ENCODE measurements at regions of chr11 and their contacts with region 1.

Region 1: GRCh38 chr11:34051349-34052035 is at the start of gene CAPRIN1:
- DNase-seq: peak; percentile 94
- ATAC-seq: peak; percentile 67
- H3K4me3 ChIP-seq: peak within 1 kb of the TSS; percentile 90 to 98 (median 95)
- H3K4me3 Mint-ChIP-seq: peak within 1 kb of the TSS; percentile 97
- H3K27ac ChIP-seq: peak within 1 kb of the TSS; percentile 99 to 100
- H3K27ac Mint-ChIP-seq: peak within 1 kb of the TSS; percentile 96
- H3K4me1 ChIP-seq: peaks cover 27 to 30% of the 10 kb centered on the region in 2 donors
- H3K4me1 Mint-ChIP-seq: peaks cover 28% of the 10 kb centered on the region
- H3K27me3 ChIP-seq: no peaks in the 10 kb centered on the region
- H3K27me3 Mint-ChIP-seq: no peaks in the 10 kb centered on the region
- CTCF ChIP-seq: no peak
- total RNA-seq, gene CAPRIN1: 132 and 133 TPM in 2 replicates

Region 2: DNA sequence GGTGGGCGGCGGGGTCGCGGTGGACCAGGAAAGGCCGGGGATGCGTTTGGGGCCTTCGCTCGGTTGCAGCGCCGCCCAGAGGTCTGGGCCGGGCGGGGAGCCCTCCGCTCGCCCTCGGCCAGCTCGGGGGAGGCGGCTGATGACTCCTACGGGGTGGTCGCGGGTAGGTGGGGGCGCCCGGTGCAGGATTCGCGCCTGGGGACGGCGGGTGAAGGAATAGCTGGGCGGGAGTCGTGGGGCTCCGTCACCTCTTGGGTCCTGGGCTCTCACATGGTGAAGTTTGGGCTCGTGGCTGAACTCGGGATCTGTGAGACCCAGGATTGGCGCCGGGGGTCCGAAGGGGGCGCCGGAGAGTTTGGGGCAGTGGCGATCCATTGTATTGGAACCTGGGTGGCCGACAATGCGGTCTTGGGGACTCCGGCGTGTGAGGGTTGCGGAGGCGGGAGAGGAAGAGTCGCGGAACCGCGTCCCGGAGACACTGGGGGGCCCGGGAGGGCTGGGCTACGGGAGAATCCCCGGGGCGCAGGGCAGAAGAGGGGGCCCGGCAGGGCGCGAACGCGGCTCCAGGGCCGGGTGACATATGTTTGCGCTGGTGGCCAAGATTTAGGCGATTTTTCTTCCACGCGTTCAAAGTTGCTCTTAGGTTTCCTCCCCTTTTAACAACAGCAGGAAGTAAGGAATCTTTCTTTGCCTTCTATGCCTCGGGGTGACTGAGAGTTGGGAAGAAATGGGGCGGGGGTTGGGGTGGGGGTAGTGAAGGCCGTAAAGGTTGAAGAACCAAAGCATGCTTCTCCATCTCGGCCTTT is 1157.9 kb before region 1 on chr11:
- CTCF ChIA-PET with region 1: no interaction called
- POLR2A ChIA-PET with region 1: no interaction called
- intact Hi-C with region 1: loop called (anchors 5 kb)
- DNase-seq: peak; percentile 79
- ATAC-seq: peak; percentile 44
- H3K4me3 ChIP-seq: peak overlapping the region; percentile 22 to 88 (median 83)
- H3K4me3 Mint-ChIP-seq: peak overlapping the region; percentile 88
- H3K27ac ChIP-seq: peak overlapping the region; percentile 61 to 70
- H3K27ac Mint-ChIP-seq: peak overlapping the region; percentile 93
- H3K4me1 ChIP-seq: peaks cover 12 to 16% of the 10 kb centered on the region in 2 donors
- H3K4me1 Mint-ChIP-seq: peaks cover 36% of the 10 kb centered on the region
- H3K27me3 ChIP-seq: no peaks in the 10 kb centered on the region
- H3K27me3 Mint-ChIP-seq: no peaks in the 10 kb centered on the region
- CTCF ChIP-seq: peak; percentile 63

Region 3: DNA sequence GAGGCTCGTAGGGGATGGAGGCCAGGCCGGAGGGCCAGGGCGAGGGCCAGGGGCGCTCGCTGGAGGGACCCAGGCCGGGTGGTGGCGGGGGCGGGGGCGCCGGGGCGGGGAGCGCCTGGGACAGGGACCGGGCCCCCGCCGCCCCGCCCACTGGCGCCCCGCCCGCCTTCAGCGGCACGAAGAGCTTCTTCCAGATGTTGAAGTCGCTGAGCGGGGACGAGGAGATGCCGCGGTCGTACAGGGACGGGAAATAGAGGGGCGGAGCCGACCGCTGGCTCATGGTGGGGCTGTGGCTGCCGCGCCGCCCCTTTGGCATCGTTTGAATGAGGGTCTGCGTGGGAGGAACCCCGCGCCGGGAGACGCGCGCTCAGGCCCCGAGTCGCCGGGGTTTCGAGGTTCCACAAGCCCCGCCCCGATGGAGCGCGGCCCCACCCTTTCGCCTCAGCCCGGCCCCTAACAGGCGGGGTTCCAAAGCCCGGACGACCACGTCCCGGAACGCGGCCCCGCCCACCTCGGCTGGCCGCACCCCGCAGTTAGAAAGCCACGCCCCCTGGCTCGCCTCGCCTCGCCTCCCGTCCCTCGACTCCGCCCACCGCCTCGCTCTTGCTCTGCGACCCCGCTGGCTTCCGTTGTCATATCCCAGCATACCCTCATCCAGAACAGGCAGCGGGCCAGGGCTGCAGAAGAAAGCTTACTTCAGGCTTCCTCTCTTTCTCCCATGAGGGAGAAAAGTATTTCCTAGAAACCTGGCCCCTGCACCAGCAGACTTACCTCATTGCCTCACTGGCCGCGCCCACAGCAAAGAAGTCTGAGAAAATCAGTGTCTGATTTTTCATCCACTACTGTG is 350.8 kb before region 1 on chr11 and contains the start of gene C11orf91:
- CTCF ChIA-PET with region 1: no interaction called
- POLR2A ChIA-PET with region 1: no interaction called
- intact Hi-C with region 1: loop called (anchors 2 kb)
- DNase-seq: peak; percentile 97
- ATAC-seq: peak; percentile 99
- H3K4me3 ChIP-seq: peak within 1 kb of the TSS; percentile 53 to 74 (median 60)
- H3K4me3 Mint-ChIP-seq: peak within 1 kb of the TSS; percentile 93
- H3K27ac ChIP-seq: no peak within 1 kb of the TSS
- H3K27ac Mint-ChIP-seq: peak within 1 kb of the TSS; percentile 57
- H3K4me1 ChIP-seq: peaks cover 6 to 16% of the 10 kb centered on the region in 2 donors
- H3K4me1 Mint-ChIP-seq: peaks cover 17% of the 10 kb centered on the region
- H3K27me3 ChIP-seq: peaks cover 0 to 14% (median 3%) of the 10 kb centered on the region in 4 experiments
- H3K27me3 Mint-ChIP-seq: peaks cover 5% of the 10 kb centered on the region
- CTCF ChIP-seq: no peak
- total RNA-seq, gene C11orf91: not detected in 2 replicates

Region 4: DNA sequence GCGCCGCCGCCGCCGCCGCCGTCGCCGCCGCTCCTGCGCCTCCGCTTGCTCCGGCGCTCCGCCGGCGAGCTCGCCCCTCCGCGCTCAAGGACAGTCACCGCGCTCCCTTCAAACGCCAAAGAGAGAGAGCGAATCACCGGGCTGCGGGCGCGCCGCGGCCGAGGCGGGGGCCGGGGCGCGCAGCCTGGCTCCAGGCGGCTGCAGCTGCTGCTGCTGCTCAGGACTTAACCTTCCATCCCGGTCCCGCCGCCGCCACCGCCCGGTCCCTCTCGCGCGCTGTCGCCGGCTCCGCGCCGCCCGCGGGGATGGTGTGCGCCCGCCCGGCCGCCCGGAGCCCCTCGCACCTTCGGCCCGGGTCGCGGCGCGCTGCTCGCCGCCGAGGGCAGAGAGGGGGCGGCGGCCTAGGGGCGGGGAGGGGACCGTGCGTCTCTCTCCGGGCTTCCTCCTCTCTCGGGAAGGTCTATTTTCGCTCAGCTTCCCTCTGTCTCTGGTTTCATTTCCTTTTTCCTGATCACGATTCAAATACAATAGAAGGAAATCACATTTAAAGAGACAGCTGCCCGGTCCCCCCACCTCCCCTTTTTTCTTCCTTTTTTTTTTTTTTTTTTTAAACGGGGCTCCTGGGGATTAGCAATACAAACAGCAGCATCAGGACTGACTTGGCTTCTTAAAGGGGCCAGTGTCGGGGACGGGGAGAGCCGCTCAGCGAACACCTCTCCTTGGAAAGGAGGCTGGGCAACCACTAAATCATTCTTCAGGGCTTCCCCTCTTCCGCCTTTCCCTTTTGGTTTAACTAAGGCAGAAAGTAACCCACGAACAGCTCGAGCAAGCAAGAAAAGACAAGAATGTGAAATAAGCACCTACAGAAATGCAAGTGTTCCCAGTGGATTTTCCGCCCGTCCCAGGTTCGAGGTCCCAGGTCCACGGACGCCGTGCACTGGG is 181.7 kb before region 1 on chr11:
- CTCF ChIA-PET with region 1: no interaction called
- POLR2A ChIA-PET with region 1: no interaction called
- intact Hi-C with region 1: loop called (anchors 5 kb)
- DNase-seq: peak; percentile 75
- ATAC-seq: peak; percentile 72
- H3K4me3 ChIP-seq: peak overlapping the region; percentile 64 to 86 (median 82)
- H3K4me3 Mint-ChIP-seq: peak overlapping the region; percentile 98
- H3K27ac ChIP-seq: no peak overlapping the region
- H3K27ac Mint-ChIP-seq: peak overlapping the region; percentile 83
- H3K4me1 ChIP-seq: peaks cover 26 to 30% of the 10 kb centered on the region in 2 donors
- H3K4me1 Mint-ChIP-seq: peaks cover 32% of the 10 kb centered on the region
- H3K27me3 ChIP-seq: peaks cover 0 to 7% (median 0%) of the 10 kb centered on the region in 4 experiments
- H3K27me3 Mint-ChIP-seq: peaks cover 3% of the 10 kb centered on the region
- CTCF ChIP-seq: no peak

Region 5: GRCh38 chr11:34068111-34068510 is 16.6 kb after region 1 on chr11:
- CTCF ChIA-PET with region 1: interaction called, 4 read pairs
- POLR2A ChIA-PET with region 1: no interaction called
- intact Hi-C with region 1: loop called (anchors 2 kb)
- DNase-seq: no peak
- ATAC-seq: no peak
- H3K4me3 ChIP-seq: no peak overlapping the region
- H3K4me3 Mint-ChIP-seq: peak overlapping the region; percentile 38
- H3K27ac ChIP-seq: peak overlapping the region; percentile 16 to 38
- H3K27ac Mint-ChIP-seq: peak overlapping the region; percentile 53
- H3K4me1 ChIP-seq: peaks cover 14 to 17% of the 10 kb centered on the region in 2 donors
- H3K4me1 Mint-ChIP-seq: peaks cover 51% of the 10 kb centered on the region
- H3K27me3 ChIP-seq: no peaks in the 10 kb centered on the region
- H3K27me3 Mint-ChIP-seq: no peaks in the 10 kb centered on the region
- CTCF ChIP-seq: no peak

Region 6: DNA sequence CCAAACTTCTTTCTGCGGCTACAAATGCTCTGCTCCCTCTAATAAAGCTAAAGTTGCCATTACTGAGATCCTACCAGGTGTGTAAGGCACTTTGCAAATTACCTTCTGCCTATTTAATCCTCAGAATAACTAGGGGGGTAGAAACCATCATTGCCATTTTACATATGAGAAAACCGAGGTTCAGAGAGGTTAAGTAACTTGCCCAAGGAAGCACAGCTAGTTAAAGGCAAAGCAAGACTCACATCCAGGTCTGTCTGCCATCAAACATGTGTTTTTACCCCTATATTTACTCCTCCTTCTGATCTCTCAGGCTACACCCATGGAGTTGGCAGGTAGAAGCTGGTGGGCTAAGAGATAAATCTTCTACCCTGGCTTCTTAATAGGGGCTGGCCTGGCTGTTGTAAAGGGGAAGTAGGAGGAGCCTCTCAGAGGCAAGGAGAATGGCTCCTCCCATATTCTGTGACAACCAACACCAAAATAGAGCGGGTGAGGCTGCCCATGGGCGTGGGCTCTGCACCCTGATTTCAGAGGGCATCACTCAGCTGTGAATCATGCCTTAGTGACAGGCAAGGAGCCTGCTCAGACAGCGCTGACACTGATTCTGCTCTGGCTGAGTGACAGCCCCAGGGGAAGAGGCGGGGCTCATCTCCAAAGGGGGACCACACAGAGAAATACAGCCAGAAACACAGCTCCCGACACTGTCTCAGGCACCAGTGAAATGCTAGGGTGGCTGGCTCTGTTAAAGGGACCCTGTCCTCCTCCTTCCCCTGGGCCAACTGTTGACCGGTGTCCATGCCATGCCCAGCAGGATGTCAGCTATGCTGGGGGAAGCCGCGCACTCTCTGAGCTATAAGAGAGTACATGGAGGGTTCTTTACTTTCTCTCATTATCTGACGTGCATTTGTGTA is 199.5 kb after region 1 on chr11:
- CTCF ChIA-PET with region 1: no interaction called
- POLR2A ChIA-PET with region 1: no interaction called
- intact Hi-C with region 1: loop called (anchors 1 kb)
- DNase-seq: peak; percentile 93
- ATAC-seq: peak; percentile 99
- H3K4me3 ChIP-seq: peak overlapping the region in 4 of 5 experiments; percentile 13 to 59 (median 46)
- H3K4me3 Mint-ChIP-seq: peak overlapping the region; percentile 47
- H3K27ac ChIP-seq: peak overlapping the region; percentile 67 to 76
- H3K27ac Mint-ChIP-seq: peak overlapping the region; percentile 72
- H3K4me1 ChIP-seq: peaks cover 19 to 26% of the 10 kb centered on the region in 2 donors
- H3K4me1 Mint-ChIP-seq: peaks cover 36% of the 10 kb centered on the region
- H3K27me3 ChIP-seq: no peaks in the 10 kb centered on the region
- H3K27me3 Mint-ChIP-seq: no peaks in the 10 kb centered on the region
- CTCF ChIP-seq: no peak

Region 7: DNA sequence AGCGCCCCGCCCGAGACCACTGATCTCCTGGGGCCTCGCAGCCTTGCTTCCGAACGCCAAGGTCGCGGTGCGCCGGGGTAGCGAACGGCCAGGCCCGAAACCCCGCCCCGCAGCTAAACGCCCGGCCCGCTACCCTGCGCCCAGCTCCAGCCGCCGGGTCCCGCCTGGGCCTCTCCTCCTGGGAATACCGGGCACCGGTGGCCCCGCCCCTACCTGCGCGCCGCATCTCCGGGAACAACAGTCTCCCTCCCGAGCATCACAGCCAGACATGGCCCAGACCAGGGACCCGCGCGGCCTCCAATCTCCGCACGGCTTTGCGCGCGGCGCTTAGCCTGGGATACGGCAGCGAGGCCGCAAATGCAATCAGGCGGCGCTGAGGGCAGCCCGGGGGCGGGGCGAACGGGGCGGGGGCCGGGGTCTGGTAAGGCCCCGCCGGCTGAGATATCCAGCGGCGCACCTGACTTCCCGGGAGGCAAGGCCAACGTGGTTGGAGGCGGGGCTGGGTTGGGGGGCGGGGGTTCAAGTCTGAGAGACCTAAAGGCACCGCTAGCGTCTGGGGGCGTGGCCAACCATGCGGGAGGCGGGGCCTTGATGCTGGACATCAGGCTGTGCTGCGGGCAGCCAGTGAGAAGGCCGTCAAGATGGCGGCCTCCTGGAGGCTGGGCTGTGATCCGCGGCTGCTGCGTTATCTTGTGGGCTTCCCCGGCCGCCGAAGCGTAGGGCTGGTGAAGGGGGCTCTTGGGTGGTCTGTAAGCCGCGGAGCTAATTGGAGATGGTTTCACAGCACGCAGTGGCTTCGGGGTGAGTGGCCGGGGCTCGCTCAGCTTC is 864.7 kb after region 1 on chr11 and contains the starts of genes APIP and PDHX:
- CTCF ChIA-PET with region 1: no interaction called
- POLR2A ChIA-PET with region 1: no interaction called
- intact Hi-C with region 1: loop called (anchors 1 kb)
- DNase-seq: peak; percentile 94
- ATAC-seq: peak; percentile 93
- H3K4me3 ChIP-seq: peak within 1 kb of the TSS; percentile 64 to 95 (median 85)
- H3K4me3 Mint-ChIP-seq: peak within 1 kb of the TSS; percentile 99
- H3K27ac ChIP-seq: peak within 1 kb of the TSS; percentile 84 to 85
- H3K27ac Mint-ChIP-seq: peak within 1 kb of the TSS; percentile 97
- H3K4me1 ChIP-seq: peaks cover 10 to 18% of the 10 kb centered on the region in 2 donors
- H3K4me1 Mint-ChIP-seq: peaks cover 33% of the 10 kb centered on the region
- H3K27me3 ChIP-seq: no peaks in the 10 kb centered on the region
- H3K27me3 Mint-ChIP-seq: no peaks in the 10 kb centered on the region
- CTCF ChIP-seq: no peak
- total RNA-seq, gene APIP: 18.5 and 19.4 TPM in 2 replicates
- total RNA-seq, gene PDHX: 25.8 and 35.4 TPM in 2 replicates

Measured in B cell (primary cell).